Mammary epithelial cell (primary cell): ENCODE measurements at regions of chr3 and their contacts with region 1.

Region 1: GRCh38 chr3:112437146-112438022 is 61.9 kb downstream of the BTLA start:
- DNase-seq: peak; percentile 52
- H3K4me3 ChIP-seq: no peak overlapping the region
- H3K27ac ChIP-seq: no peak overlapping the region
- H3K4me1 ChIP-seq: no peaks in the 10 kb centered on the region
- H3K27me3 ChIP-seq: no peaks in the 10 kb centered on the region
- CTCF ChIP-seq: peak; percentile 34 to 56

Region 2: GRCh38 chr3:112136959-112137693 is 300.3 kb before region 1 on chr3:
- CTCF ChIA-PET with region 1: no interaction called
- dilution Hi-C with region 1: no loop called
- in situ Hi-C with region 1: no loop called
- intact Hi-C with region 1: loop called (anchors 1 kb)
- DNase-seq: peak; percentile 53
- H3K4me3 ChIP-seq: no peak overlapping the region
- H3K27ac ChIP-seq: no peak overlapping the region
- H3K4me1 ChIP-seq: peaks cover 9% of the 10 kb centered on the region
- H3K27me3 ChIP-seq: no peaks in the 10 kb centered on the region
- CTCF ChIP-seq: peak; percentile 77 to 79

Region 3: GRCh38 chr3:112293368-112294321 is 143.7 kb before region 1 on chr3 and contains the start of gene SLC9C1:
- CTCF ChIA-PET with region 1: interaction called, 5 read pairs
- dilution Hi-C with region 1: no loop called
- in situ Hi-C with region 1: no loop called
- intact Hi-C with region 1: loop called (anchors 1 kb)
- DNase-seq: peak; percentile 81
- H3K4me3 ChIP-seq: peak within 1 kb of the TSS; percentile 38 to 49 (median 47)
- H3K27ac ChIP-seq: peak within 1 kb of the TSS; percentile 63
- H3K4me1 ChIP-seq: peaks cover 6% of the 10 kb centered on the region
- H3K27me3 ChIP-seq: no peaks in the 10 kb centered on the region
- CTCF ChIP-seq: peak; percentile 62 to 73
- total RNA-seq, gene SLC9C1: 0.47 to 1.7 TPM

Region 4: DNA sequence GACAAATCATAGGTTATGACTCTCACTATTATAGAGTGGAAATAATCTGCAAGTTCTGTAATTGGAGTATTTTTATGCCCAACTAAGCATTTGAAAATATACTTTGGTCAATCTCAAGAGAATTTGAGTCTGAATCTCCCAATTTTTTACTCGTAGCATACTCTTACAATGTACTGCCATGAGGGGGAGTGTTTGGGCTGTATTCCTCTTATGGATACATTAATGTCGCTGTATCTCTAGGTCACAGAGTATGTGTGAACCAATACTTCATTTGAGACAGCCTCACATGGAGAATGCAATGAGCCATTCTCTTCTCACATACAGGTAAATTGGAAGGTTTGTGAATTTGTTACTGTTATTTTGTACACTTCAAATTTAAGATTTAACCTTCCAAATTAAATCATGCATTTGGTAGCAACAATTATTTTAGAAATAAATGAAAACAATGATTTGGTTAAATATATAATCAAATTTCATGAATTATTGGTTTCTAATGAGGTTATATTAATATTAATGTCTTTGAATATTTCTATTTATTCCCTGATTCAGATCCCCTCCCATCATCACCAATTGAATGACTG is 109.9 kb before region 1 on chr3:
- CTCF ChIA-PET with region 1: interaction called, 3 read pairs
- dilution Hi-C with region 1: loop called (anchors 10 kb)
- in situ Hi-C with region 1: loop called in 1 of 2 experiments (anchors 25 kb)
- intact Hi-C with region 1: loop called (anchors 1 kb)
- DNase-seq: peak; percentile 61
- H3K4me3 ChIP-seq: no peak overlapping the region
- H3K27ac ChIP-seq: no peak overlapping the region
- H3K4me1 ChIP-seq: no peaks in the 10 kb centered on the region
- H3K27me3 ChIP-seq: no peaks in the 10 kb centered on the region
- CTCF ChIP-seq: peak; percentile 72 to 76

Region 5: GRCh38 chr3:112333002-112333380 is 104.4 kb before region 1 on chr3 and contains the start of gene CD200:
- CTCF ChIA-PET with region 1: interaction called, 3 read pairs
- dilution Hi-C with region 1: loop called (anchors 10 kb)
- in situ Hi-C with region 1: loop called in 1 of 2 experiments (anchors 25 kb)
- intact Hi-C with region 1: loop called (anchors 1 kb)
- DNase-seq: peak; percentile 63
- H3K4me3 ChIP-seq: peak within 1 kb of the TSS; percentile 63 to 69 (median 67)
- H3K27ac ChIP-seq: peak within 1 kb of the TSS; percentile 6
- H3K4me1 ChIP-seq: peaks cover 2% of the 10 kb centered on the region
- H3K27me3 ChIP-seq: no peaks in the 10 kb centered on the region
- CTCF ChIP-seq: no peak
- total RNA-seq, gene CD200: 13.0 to 23.7 TPM

Region 6: GRCh38 chr3:112519424-112520001 is 82.1 kb after region 1 on chr3:
- CTCF ChIA-PET with region 1: no interaction called
- dilution Hi-C with region 1: no loop called
- in situ Hi-C with region 1: no loop called
- intact Hi-C with region 1: loop called (anchors 2 kb)
- DNase-seq: peak; percentile 58
- H3K4me3 ChIP-seq: no peak overlapping the region
- H3K27ac ChIP-seq: no peak overlapping the region
- H3K4me1 ChIP-seq: no peaks in the 10 kb centered on the region
- H3K27me3 ChIP-seq: no peaks in the 10 kb centered on the region
- CTCF ChIP-seq: peak; percentile 74 to 76